ENCODE measurements at regions of chr20 and their contacts with region 1.

Region 1: DNA sequence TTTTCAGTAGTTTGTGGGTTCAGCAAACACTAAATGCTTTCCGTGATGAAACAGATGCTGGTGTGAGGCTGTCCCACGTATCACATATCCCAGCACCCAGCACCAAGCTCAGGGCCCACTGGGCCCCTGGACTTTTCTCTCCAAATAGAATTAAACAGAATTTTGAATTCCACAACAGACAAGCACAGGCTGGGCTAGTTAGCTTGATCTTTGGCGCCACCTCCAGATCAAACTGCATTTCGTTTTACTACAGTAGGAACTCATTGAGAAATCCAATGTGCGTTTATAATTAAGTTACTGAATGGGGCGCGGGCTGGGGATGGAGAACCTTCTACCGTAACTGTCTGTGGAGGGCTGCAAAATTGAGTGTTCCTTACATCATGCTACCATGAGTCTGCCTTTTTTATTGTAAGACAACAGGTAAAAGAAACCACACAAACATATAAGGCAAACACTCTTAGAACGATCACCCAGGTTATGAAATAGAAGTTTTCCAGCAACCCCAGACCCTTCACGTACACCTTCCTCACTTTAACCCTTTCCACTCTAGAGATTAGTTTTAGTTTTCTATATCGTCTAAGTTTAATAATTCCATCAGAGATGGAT is 107.8 kb downstream of the ZFP64 start:
- DNase-seq: peak; percentile 73
- ATAC-seq: no peak
- H3K4me3 Mint-ChIP-seq: no peak overlapping the region
- H3K27ac Mint-ChIP-seq: no peak overlapping the region
- H3K4me1 Mint-ChIP-seq: peaks cover 6% of the 10 kb centered on the region
- H3K27me3 Mint-ChIP-seq: no peaks in the 10 kb centered on the region

Region 2: DNA sequence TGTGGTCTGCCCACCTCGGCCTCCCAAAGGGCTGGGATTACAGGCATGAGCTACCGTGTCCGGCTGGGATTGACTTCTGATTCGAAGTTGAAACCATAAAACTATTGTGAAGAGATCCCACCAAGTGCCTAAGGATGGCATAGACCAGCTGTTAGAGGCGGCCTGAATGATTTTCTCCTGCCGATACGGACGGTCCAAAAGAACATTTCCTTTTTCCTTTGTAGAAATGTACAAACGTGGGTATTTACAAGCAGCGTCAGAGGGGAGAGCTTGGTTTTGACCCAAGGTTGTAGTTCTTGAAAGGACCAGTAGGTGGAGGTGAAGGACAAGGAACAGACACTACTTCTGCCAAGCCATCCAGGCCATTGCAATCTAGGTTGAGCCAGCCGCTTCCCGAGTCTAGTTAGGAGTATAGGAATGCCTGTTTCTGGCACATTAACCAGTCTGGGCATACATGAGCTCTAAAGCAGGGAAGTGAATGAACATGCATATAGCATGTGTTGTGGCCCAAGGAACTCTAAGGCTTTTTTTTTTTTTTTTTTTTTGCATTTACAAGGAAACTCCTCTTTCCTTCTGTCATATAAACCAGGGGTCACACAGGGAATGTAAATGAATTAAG is 1096.0 kb before region 1 on chr20:
- CTCF ChIA-PET with region 1: no interaction called
- POLR2A ChIA-PET with region 1: no interaction called
- intact Hi-C with region 1: loop called in 1 of 2 experiments (anchors 5 kb)
- DNase-seq: peak; percentile 71
- ATAC-seq: peak; percentile 89
- H3K4me3 Mint-ChIP-seq: no peak overlapping the region
- H3K27ac Mint-ChIP-seq: no peak overlapping the region
- H3K4me1 Mint-ChIP-seq: no peaks in the 10 kb centered on the region
- H3K27me3 Mint-ChIP-seq: peaks cover 23% of the 10 kb centered on the region

Region 3: DNA sequence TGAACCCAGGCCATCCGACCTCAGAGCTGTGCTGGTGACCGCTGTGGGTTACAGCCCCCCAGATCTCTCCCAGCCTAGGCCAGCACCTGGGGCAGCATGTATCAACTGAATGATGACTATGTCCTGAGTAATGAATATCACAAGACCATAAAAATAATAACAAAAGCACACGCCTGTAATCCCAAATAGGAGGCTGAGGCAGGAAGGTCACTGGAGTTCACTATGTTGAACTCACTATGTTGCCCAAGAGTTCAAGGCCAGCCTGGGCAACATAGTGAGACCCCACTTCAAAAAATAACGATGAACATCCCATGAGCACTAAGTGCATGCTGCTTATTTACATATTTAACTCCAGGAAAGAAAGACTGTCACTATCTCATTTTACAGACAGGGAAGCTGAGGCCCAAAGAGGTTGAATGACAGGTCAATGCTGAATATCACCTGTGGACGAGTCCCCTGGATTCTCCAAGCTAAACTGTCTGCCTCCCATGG is 633.5 kb before region 1 on chr20:
- CTCF ChIA-PET with region 1: no interaction called
- POLR2A ChIA-PET with region 1: no interaction called
- intact Hi-C with region 1: loop called in 1 of 2 experiments (anchors 5 kb)
- DNase-seq: no peak
- ATAC-seq: no peak
- H3K4me3 Mint-ChIP-seq: no peak overlapping the region
- H3K27ac Mint-ChIP-seq: peak overlapping the region; percentile 13
- H3K4me1 Mint-ChIP-seq: peaks cover 28% of the 10 kb centered on the region
- H3K27me3 Mint-ChIP-seq: no peaks in the 10 kb centered on the region

Region 4: GRCh38 chr20:51695574-51696303 is 388.0 kb before region 1 on chr20:
- CTCF ChIA-PET with region 1: no interaction called
- POLR2A ChIA-PET with region 1: no interaction called
- intact Hi-C with region 1: loop called (anchors 2 to 5 kb)
- DNase-seq: peak; percentile 41
- ATAC-seq: peak; percentile 78
- H3K4me3 Mint-ChIP-seq: no peak overlapping the region
- H3K27ac Mint-ChIP-seq: no peak overlapping the region
- H3K4me1 Mint-ChIP-seq: peaks cover 16% of the 10 kb centered on the region
- H3K27me3 Mint-ChIP-seq: peaks cover 18% of the 10 kb centered on the region

Region 5: DNA sequence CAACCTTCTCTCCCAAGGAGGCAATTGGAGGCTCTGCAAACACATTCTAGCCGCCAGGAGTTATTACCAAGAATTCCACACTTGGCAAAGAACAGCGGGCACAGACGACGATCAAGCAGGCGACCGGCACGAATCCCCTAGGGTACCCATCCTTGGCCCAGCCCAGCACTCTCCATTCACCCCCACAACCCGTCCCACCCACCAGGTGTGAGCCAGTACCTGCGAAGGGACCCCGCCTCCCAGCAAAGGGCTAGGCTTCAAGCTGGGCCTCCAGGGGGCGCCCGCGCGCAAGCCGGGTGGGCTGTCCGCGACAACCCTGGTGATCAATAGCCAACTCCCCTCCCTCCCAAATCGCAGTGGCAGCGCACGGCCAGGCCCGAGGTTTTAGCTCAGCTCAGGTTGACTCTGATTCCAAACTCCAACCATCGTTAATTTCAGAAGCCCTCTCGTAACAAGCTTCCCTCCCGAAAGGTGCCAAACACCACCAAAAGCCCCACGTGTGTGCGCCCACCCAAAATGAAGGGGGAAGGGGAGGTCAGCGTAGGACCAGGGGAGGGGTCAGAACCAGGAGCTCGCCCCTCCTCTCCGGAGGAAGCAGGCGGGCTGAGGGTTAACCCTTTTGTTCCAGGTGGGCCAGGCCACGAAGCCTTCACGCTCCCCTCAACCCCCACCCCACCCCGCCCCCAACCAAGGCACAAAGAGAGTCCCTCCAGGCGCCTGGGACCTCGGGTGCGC is 283.5 kb before region 1 on chr20:
- CTCF ChIA-PET with region 1: interaction called, 3 read pairs
- POLR2A ChIA-PET with region 1: no interaction called
- intact Hi-C with region 1: loop called (anchors 1 to 5 kb)
- DNase-seq: peak; percentile 84
- ATAC-seq: peak; percentile 78
- H3K4me3 Mint-ChIP-seq: no peak overlapping the region
- H3K27ac Mint-ChIP-seq: no peak overlapping the region
- H3K4me1 Mint-ChIP-seq: peaks cover 8% of the 10 kb centered on the region
- H3K27me3 Mint-ChIP-seq: peaks cover 55% of the 10 kb centered on the region

Region 6: DNA sequence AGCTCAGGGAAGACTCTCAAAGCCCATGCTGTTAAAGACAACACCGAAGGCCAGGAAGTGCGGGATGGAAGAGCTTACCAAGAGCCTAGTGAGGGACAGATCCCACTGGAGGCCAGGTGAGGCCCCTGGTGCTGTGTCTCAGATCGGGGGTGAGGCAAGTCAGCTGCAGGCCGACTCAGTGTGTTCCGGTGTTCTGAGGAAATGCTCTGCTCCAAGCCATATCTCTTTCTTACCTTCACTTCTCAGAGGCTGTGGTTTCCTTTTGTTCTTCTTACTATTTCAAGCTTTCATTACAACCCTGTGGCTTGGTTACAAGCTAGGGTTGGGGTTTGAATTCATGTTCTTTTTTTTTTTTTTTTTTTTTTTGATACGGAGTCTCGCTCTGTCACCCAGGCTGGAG is 222.1 kb after region 1 on chr20:
- CTCF ChIA-PET with region 1: no interaction called
- POLR2A ChIA-PET with region 1: no interaction called
- intact Hi-C with region 1: no loop called
- DNase-seq: peak; percentile 49
- ATAC-seq: peak; percentile 87
- H3K4me3 Mint-ChIP-seq: no peak overlapping the region
- H3K27ac Mint-ChIP-seq: peak overlapping the region; percentile 45
- H3K4me1 Mint-ChIP-seq: peaks cover 56% of the 10 kb centered on the region
- H3K27me3 Mint-ChIP-seq: no peaks in the 10 kb centered on the region

Region 7: DNA sequence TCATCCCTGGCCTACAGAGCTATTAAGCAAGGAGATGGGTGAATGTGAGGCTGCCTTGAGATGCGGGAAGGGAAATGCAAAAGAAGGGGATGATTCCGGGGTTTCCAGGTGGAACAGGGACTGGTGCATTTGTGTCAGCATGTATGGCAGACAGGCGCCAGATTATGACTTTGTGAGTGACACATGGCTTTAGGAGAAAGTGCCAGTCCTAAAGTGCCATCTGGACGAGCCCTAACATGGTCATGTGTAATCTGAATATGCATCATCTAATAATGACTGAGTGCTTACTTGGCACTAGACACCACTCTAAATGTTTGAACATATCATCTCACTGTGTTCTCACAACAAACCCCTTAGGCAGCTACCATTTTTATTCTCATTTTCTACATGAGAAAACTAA is 693.4 kb after region 1 on chr20:
- CTCF ChIA-PET with region 1: no interaction called
- POLR2A ChIA-PET with region 1: no interaction called
- intact Hi-C with region 1: no loop called
- DNase-seq: no peak
- ATAC-seq: no peak
- H3K4me3 Mint-ChIP-seq: no peak overlapping the region
- H3K27ac Mint-ChIP-seq: no peak overlapping the region
- H3K4me1 Mint-ChIP-seq: no peaks in the 10 kb centered on the region
- H3K27me3 Mint-ChIP-seq: peaks cover 11% of the 10 kb centered on the region